Activated CD4-positive, alpha-beta memory T cell treated with anti-CD3 and anti-CD28 coated beads for 36 hours (primary cell): ENCODE measurements at regions of chr4 and their contacts with region 1.

Region 1: DNA sequence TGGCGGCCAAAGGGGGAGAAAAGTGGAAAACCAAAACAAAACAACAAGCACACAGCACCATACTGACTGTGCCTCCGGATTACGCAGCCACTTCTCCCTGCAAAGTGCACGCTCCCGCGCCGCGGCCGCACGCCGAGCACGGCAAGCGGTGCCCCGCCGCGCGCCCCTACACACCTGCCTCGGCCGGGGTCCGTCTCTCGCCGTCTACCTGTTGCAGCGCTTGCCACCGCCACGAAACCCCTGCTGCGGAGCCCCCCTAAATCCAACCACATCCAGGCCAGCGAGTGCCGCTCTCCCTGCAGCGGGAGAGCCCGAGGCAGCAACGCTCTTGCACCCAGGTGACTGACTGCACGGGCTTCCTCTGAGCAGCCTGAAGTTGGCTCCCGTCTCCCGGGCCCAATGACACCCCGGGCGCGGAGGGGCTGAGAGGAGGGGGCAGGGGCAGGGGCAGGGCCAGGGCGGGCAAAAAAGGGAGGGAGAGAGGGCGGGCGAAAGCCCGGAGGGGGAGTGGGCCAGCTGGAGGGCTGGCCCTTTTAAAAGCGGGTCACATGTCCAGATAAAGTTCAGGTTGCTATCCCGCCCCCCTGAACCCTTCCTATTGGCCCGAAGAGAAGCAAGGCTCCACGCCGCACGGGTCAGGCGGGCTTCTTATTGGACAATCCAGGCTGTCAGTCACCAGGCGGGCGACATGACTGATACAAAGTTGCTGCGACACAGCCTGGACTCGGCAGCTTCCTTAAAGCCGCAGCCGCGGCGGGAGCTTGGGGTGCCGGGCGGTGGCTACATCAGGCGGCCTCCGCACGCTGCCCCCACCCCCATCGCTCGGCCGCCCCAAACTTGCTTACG is at the start of gene NR3C2:
- DNase-seq: peak; percentile 98
- H3K4me3 Mint-ChIP-seq: peak within 1 kb of the TSS; percentile 96
- H3K27ac Mint-ChIP-seq: peak within 1 kb of the TSS; percentile 91
- H3K4me1 Mint-ChIP-seq: peaks cover 42% of the 10 kb centered on the region
- H3K27me3 Mint-ChIP-seq: peaks cover 5% of the 10 kb centered on the region
- total RNA-seq, gene NR3C2: 4.2 to 4.3 TPM

Region 2: DNA sequence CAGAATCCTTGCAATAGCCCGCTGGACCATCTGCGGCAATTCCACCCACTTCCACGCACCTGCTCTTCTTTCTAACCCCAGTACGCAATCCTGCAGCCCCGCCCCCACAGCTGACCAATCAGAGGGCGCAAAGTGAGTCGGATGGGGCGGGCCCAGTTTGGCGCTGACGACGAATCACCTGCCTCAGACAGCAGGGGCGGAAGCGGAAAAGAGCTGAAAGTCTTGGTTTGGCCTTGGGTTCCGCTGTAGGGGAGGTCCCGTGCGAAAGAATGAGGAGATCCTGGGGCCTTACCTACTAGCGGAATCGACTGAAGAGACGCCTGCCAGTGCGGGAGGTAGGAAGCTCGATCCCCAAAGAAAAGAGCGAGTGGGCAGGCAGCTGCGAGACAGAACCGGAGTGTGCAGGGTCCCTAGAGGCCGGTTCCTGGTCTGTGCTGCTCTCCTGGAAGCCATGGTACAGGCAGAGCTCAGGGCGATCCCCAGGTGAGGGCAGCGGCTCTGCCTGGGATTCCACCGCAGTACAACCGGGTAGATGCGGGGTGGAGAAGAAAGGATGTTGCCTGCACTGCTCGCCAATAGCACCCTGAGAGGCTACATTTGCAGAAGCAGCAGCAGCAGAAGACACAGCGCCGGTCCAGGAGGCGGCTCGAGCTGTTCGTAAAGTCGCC is 824.9 kb before region 1 on chr4 and contains the start of gene TMEM184C:
- CTCF ChIA-PET with region 1: no interaction called
- POLR2A ChIA-PET with region 1: interaction called, 4 read pairs
- intact Hi-C with region 1: loop called (anchors 1 kb)
- DNase-seq: peak; percentile 99
- H3K4me3 Mint-ChIP-seq: peak within 1 kb of the TSS; percentile 100
- H3K27ac Mint-ChIP-seq: peak within 1 kb of the TSS; percentile 98
- H3K4me1 Mint-ChIP-seq: peaks cover 25% of the 10 kb centered on the region
- H3K27me3 Mint-ChIP-seq: no peaks in the 10 kb centered on the region
- total RNA-seq, gene TMEM184C: 15.5 to 15.7 TPM

Region 3: DNA sequence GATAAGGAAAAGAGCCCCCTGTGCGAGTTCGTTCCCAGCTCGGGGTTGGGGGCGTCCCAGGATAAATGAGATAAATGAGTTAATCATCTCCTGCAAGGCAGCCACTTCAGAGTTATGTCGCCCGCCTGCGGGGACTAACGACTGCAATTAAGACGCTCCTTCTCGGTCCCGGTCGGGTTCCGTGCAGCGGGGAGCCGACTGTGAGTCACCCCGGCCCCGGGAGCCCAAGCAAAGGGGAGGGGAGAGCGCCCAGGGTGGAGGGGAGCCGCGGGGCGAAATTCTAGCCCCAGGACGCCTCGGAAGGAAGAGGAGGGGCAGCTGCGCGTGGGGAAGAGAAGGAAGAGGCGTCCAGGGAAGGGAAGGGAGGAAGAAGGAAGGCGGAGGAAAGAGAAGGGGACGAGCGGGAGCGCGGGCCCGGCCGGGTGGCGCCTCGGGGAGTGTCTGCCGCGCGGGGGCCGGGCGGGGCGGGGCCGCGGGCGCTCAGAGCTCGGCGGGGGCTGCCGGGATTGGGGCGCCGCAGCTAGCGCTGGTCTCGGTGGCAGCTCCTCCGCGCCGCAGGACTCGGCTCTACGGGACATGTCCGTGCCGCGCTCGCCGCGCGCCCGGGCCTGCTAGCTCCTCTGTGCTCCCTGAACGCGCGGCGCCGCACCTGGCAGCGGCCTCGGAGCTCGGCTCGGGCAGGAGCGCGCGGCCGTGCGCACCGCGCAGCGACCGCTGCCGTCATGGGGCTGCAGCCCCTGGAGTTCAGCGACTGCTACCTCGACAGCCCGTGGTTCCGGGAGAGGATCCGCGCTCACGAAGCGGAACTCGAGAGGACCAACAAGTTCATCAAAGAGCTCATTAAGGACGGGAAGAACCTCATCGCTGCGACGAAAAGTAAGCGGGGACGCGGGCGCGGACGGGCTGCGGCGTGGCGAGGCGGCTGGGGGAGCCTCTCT is 710.4 kb before region 1 on chr4 and contains the start of gene ARHGAP10:
- CTCF ChIA-PET with region 1: no interaction called
- POLR2A ChIA-PET with region 1: no interaction called
- intact Hi-C with region 1: loop called (anchors 5 kb)
- DNase-seq: peak; percentile 78
- H3K4me3 Mint-ChIP-seq: peak within 1 kb of the TSS; percentile 83
- H3K27ac Mint-ChIP-seq: peak within 1 kb of the TSS; percentile 77
- H3K4me1 Mint-ChIP-seq: peaks cover 42% of the 10 kb centered on the region
- H3K27me3 Mint-ChIP-seq: no peaks in the 10 kb centered on the region
- total RNA-seq, gene ARHGAP10: 7.1 to 8.0 TPM

Region 4: DNA sequence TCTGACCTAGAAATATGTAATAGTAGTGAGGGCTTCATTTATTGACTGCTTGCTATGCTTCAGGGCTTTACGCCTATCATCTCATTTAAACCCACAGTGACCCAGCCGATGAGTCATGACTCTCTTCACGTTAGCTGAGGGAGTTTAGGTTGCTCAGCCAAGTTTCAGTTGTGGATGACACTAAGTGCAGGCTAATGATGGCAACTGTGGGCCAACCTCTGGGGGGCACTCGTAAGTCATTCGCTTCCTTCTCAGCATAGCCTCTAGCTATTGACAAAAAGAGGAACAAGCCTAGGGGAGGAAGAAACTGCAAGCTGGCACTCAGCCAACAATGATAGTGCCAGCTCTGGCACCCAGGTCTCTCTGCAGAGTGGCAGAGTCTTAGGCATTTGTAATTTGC is 385.3 kb before region 1 on chr4:
- CTCF ChIA-PET with region 1: interaction called, 9 read pairs
- POLR2A ChIA-PET with region 1: interaction called, 4 read pairs
- intact Hi-C with region 1: loop called (anchors 1 kb)
- DNase-seq: peak; percentile 85
- H3K4me3 Mint-ChIP-seq: no peak overlapping the region
- H3K27ac Mint-ChIP-seq: peak overlapping the region; percentile 53
- H3K4me1 Mint-ChIP-seq: peaks cover 77% of the 10 kb centered on the region
- H3K27me3 Mint-ChIP-seq: no peaks in the 10 kb centered on the region

Region 5: GRCh38 chr4:148355442-148356123 is 86.6 kb before region 1 on chr4:
- CTCF ChIA-PET with region 1: no interaction called
- POLR2A ChIA-PET with region 1: no interaction called
- intact Hi-C with region 1: loop called (anchors 5 kb)
- DNase-seq: peak; percentile 12
- H3K4me3 Mint-ChIP-seq: peak overlapping the region; percentile 26
- H3K27ac Mint-ChIP-seq: peak overlapping the region; percentile 18
- H3K4me1 Mint-ChIP-seq: peaks cover 28% of the 10 kb centered on the region
- H3K27me3 Mint-ChIP-seq: no peaks in the 10 kb centered on the region

Region 6: DNA sequence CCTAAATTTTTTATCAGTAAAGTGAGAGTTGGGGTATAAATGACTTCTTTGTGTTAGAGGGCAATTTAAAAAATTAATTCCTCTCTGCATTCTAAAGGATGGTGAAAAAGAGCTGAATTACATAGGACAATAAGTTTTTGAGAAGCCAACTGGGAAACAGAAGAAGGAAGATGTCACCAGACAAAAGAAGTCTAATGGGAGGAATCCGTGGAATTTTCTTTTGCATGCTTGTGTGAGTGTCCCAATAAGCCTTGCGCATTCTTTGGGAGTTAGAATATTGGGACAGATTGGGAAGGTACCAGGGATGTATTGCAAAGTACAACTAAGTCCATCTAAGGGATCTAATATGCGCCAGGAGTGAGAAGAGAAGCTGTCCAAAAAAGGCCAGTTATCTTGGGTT is 35.1 kb after region 1 on chr4:
- CTCF ChIA-PET with region 1: no interaction called
- POLR2A ChIA-PET with region 1: no interaction called
- intact Hi-C with region 1: no loop called
- DNase-seq: no peak
- H3K4me3 Mint-ChIP-seq: no peak overlapping the region
- H3K27ac Mint-ChIP-seq: no peak overlapping the region
- H3K4me1 Mint-ChIP-seq: no peaks in the 10 kb centered on the region
- H3K27me3 Mint-ChIP-seq: no peaks in the 10 kb centered on the region

Region 7: GRCh38 chr4:148651991-148652390 is 209.8 kb after region 1 on chr4:
- CTCF ChIA-PET with region 1: no interaction called
- POLR2A ChIA-PET with region 1: no interaction called
- intact Hi-C with region 1: no loop called
- DNase-seq: no peak
- H3K4me3 Mint-ChIP-seq: no peak overlapping the region
- H3K27ac Mint-ChIP-seq: no peak overlapping the region
- H3K4me1 Mint-ChIP-seq: peaks cover 4% of the 10 kb centered on the region
- H3K27me3 Mint-ChIP-seq: no peaks in the 10 kb centered on the region

Region 8: DNA sequence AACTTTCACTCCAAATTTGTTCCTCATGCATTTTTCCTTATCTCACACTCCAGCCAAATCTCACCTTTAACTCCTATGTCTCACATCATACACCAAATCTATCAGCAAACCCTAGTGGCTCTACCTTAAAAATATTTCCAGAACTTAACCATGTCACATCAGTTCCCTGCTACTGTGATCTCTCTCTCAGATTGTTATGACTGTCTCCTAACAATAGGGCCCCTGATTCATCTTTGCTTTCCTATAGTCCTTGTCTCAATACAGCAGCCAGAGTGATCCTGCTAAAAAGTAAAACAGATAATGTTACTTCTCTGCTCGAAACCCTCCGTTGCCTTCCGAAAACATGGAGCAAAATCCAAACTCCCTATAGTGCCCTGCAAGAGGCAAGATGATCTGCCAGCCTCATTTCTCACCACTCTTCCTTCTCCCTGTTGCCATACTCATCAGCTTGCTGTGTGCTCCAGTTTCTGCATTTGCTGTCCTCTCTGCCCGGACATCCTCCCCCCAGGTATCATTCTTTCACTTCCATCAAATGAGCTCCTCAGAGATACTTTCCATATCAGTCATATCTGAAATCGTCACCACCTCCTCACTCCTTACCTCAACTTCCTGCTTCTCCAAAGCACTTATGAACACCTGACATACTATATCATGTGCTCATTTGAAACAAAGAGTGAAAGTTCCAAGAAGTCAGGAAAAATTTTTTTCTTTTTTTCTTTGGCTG is 293.4 kb after region 1 on chr4:
- CTCF ChIA-PET with region 1: no interaction called
- POLR2A ChIA-PET with region 1: no interaction called
- intact Hi-C with region 1: loop called (anchors 2 kb)
- DNase-seq: peak; percentile 37
- H3K4me3 Mint-ChIP-seq: no peak overlapping the region
- H3K27ac Mint-ChIP-seq: no peak overlapping the region
- H3K4me1 Mint-ChIP-seq: no peaks in the 10 kb centered on the region
- H3K27me3 Mint-ChIP-seq: peaks cover 2% of the 10 kb centered on the region